Activated CD8-positive, alpha-beta T cell treated with anti-CD3 and anti-CD28 coated beads, Interleukin-2, amount 10 ng/mL, durations not matched to agents 7 days and 5 days (primary cell): ENCODE measurements at regions of chr19 and their contacts with region 1.

Region 1: GRCh38 chr19:19361075-19361594 is 40.5 kb downstream of the MAU2 start:
- DNase-seq: peak; percentile 80
- ATAC-seq: peak; percentile 71
- H3K4me3 Mint-ChIP-seq: no peak overlapping the region
- H3K27ac Mint-ChIP-seq: peak overlapping the region; percentile 49
- H3K4me1 Mint-ChIP-seq: peaks cover 37% of the 10 kb centered on the region
- H3K27me3 Mint-ChIP-seq: no peaks in the 10 kb centered on the region

Region 2: GRCh38 chr19:19372656-19373416 is 11.7 kb after region 1 on chr19:
- CTCF ChIA-PET with region 1: interaction called, 9 read pairs
- POLR2A ChIA-PET with region 1: interaction called, 15 read pairs
- DNase-seq: peak; percentile 66
- ATAC-seq: peak; percentile 94
- H3K4me3 Mint-ChIP-seq: peak overlapping the region; percentile 59
- H3K27ac Mint-ChIP-seq: peak overlapping the region; percentile 94
- H3K4me1 Mint-ChIP-seq: peaks cover 15% of the 10 kb centered on the region
- H3K27me3 Mint-ChIP-seq: no peaks in the 10 kb centered on the region

Region 3: DNA sequence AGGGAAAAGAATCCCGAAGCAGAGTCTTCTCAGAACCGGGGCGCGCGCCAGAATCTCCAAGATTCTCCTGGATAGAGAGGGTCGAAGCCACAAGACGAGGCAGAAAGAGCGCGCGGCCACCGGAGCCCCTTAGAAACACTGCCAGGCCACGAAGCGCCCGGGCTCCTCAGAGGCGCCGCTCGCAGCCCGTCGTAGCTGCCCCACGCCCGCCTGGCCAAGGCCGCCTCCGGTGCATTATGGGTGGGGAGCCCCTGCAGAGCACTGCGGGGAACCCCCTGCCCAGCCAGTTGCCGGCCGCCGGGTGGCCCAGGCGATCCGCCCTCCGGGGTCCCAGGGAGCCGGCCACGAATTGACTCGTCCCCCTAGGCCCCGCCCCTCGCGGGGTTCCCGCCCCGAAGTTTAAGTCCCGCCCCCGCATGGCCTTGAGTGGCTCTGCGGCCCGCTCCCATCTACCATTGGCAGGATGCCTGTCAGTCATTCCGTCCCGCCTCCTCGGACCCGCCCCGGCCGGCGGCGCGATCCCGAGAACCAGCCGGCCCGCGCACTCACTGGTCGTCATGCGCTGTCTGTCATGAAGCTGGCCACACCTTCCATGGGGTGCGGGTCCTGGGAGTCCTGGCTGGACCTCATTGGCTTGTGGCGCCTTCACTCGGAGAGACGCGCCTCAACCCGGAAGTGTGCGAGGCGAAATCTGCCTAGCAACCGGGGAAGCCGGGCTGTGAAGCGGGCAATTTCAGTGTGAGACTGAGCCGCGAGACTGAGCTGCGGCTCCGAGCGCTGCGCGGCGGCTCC is 24.2 kb after region 1 on chr19:
- CTCF ChIA-PET with region 1: interaction called, 12 read pairs
- POLR2A ChIA-PET with region 1: interaction called, 6 read pairs
- DNase-seq: peak; percentile 100
- ATAC-seq: peak; percentile 96
- H3K4me3 Mint-ChIP-seq: peak overlapping the region; percentile 80
- H3K27ac Mint-ChIP-seq: peak overlapping the region; percentile 92
- H3K4me1 Mint-ChIP-seq: peaks cover 45% of the 10 kb centered on the region
- H3K27me3 Mint-ChIP-seq: no peaks in the 10 kb centered on the region